Aorta (tissue), 5 donors: ENCODE measurements at regions of chr12 and their contacts with region 1.

Region 1: DNA sequence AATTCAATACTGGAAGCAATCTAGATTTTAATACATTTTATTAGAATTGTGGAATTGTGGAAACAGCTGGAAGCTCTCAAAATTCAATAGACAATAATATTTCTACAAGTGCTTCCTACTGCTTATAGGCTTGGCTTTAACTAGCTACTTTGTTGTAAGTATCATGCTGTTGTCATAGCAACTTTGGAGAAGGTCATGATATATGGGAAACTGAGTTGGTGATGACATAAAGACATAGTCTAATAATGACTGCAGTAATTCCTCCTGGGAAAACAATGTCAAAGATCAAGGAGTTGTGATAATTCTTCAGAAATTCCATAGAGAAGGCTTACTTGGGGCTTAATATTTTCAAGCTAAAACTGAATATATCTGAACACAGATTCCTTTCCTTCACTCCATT is 266.6 kb downstream of the KIF21A start:
- DNase-seq: no peak
- ATAC-seq: no peak
- H3K4me3 ChIP-seq: no peak overlapping the region
- H3K27ac ChIP-seq: no peak overlapping the region
- H3K4me1 ChIP-seq: no peaks in the 10 kb centered on the region
- H3K27me3 ChIP-seq: no peaks in the 10 kb centered on the region

Region 2: DNA sequence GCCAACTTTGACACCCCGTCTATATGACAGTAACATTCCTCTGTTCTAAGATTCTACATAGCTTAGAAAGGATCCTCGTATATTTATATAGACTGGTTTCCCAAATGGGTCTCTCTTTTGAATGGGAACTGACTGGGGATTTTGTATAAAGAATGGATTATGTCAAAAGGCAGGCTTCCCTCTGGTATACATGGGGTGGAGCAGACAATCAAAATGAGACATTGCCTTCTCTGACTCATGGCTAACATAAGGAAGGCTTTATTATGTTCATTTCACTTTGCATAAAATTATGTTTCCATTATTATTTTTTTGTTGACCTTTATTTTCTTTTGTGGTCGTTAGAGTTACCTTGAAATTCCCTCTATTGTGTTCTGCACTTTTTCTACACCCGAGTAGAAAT is 648.7 kb before region 1 on chr12:
- intact Hi-C with region 1: no loop called
- DNase-seq: no peak
- ATAC-seq: no peak
- H3K4me3 ChIP-seq: no peak overlapping the region
- H3K27ac ChIP-seq: no peak overlapping the region
- H3K4me1 ChIP-seq: no peaks in the 10 kb centered on the region
- H3K27me3 ChIP-seq: no peaks in the 10 kb centered on the region

Region 3: GRCh38 chr12:39102474-39103209 is 73.7 kb before region 1 on chr12:
- intact Hi-C with region 1: no loop called
- DNase-seq: no peak
- ATAC-seq: peak; percentile 15
- H3K4me3 ChIP-seq: no peak overlapping the region
- H3K27ac ChIP-seq: no peak overlapping the region
- H3K4me1 ChIP-seq: no peaks in the 10 kb centered on the region
- H3K27me3 ChIP-seq: no peaks in the 10 kb centered on the region

Region 4: DNA sequence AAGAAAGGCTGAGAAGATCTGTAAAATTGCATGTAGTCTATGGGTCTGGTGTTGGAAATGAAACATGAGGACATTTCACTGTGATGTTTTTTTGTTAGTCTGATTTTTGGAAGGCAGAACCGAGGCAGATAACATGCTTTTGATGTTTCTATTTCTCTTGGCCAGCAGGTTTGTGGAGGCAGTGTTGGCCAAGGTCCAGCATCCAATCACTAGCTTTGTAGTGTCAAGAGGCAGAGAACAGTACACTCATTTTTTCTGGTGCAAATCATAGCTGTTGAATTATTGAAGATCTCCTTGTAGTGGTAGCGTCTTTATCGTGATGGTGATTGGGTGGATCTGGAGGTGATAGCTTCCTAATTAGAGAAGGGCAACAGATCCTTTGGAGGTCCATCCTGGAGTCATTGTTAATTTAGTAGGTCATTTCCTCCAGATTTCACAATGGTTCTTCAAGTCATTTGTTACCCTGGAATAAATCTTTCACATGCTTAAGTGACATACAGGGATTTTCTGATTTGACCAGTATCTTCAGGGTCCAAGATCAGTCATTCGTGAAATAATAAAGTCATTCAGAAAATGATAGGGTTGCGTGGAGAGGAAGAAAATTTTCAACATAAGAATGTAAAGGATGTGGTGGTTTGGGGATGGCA is 18.5 kb before region 1 on chr12:
- intact Hi-C with region 1: loop called in 1 of 2 experiments (anchors 1 kb)
- DNase-seq: no peak
- ATAC-seq: no peak
- H3K4me3 ChIP-seq: no peak overlapping the region
- H3K27ac ChIP-seq: no peak overlapping the region
- H3K4me1 ChIP-seq: no peaks in the 10 kb centered on the region
- H3K27me3 ChIP-seq: no peaks in the 10 kb centered on the region